ENCODE measurements at regions of chr5 and their contacts with region 1.

Region 1: GRCh38 chr5:1167728-1168709 is 33.4 kb upstream of the SLC6A19 start:
- H3K4me3 ChIP-seq: peak overlapping the region; percentile 29
- H3K27ac ChIP-seq: no peak overlapping the region
- H3K4me1 ChIP-seq: no peaks in the 10 kb centered on the region
- CTCF ChIP-seq: peak; percentile 61

Region 2: DNA sequence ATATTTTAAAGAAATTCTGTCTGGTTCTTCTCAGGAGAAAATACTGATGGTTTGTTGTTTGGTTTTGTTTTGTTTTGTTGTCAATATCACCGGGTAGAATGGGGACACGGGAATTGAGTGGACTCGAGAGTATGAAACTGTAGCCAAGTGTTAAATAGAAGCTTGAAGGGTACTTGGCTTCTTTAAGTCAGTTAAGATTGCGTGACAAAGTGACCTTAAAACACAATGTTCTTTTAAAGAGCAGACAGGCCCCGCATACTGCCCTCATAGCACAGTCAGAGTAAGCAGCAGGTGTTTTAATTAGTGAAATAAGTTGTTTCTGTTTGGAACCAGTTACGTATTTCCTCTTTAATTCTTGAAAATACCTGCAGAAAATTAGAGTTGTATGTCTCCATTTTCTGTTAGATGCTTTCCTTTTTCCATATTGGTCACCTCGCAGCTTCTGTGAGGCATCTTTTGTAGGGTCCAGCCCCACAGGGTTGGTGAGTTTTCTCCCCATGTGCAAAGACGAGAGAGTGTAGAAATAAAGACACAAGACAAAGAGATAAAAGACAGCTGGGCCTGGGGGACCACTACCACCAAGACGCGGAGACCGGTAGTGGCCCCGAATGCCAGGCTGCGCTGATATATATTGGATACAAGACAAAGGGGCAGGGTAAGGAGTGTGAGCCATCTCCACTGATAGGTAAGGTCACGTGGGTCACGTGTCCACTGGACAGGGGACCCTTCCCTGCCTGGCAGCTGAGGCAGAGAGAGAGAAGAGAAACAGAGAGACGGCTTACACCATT is 265.7 kb before region 1 on chr5:
- CTCF ChIA-PET with region 1: interaction called, 15 read pairs
- POLR2A ChIA-PET with region 1: no interaction called
- H3K4me3 ChIP-seq: no peak overlapping the region
- H3K27ac ChIP-seq: no peak overlapping the region
- H3K4me1 ChIP-seq: no peaks in the 10 kb centered on the region
- CTCF ChIP-seq: no peak

Region 3: GRCh38 chr5:997001-997474 is 171.0 kb before region 1 on chr5:
- CTCF ChIA-PET with region 1: interaction called, 10 read pairs
- POLR2A ChIA-PET with region 1: no interaction called
- H3K4me3 ChIP-seq: peak overlapping the region; percentile 8; the same call in 1 of the 2 replicates
- H3K27ac ChIP-seq: no peak overlapping the region
- H3K4me1 ChIP-seq: peaks cover 4% of the 10 kb centered on the region
- CTCF ChIP-seq: no peak

Region 4: GRCh38 chr5:1118231-1118698 is 49.8 kb before region 1 on chr5:
- CTCF ChIA-PET with region 1: interaction called, 10 read pairs
- POLR2A ChIA-PET with region 1: interaction called, 5 read pairs
- H3K4me3 ChIP-seq: no peak overlapping the region
- H3K27ac ChIP-seq: peak overlapping the region; percentile 76
- H3K4me1 ChIP-seq: peaks cover 16% of the 10 kb centered on the region
- CTCF ChIP-seq: no peak

Region 5: DNA sequence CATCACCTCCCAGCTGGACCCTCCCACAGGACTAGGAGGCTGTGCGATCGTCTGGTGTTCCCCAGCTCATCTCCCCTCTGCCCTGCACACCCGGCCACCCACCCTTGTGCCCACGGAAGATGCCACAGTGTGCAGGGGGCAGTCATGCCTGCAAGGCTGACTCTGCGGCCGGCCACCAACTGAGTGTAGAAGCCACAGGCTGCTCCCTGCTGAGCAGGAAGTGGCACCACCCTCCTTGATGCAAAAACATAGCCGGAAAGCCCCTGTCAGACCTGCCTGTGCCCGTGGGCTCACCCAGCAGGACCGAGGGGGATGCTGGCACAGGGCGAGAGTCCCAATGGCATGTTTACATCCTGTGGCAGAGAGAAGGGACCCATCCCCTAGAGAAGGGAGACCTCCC is 15.9 kb before region 1 on chr5:
- CTCF ChIA-PET with region 1: interaction called, 17 read pairs
- POLR2A ChIA-PET with region 1: no interaction called
- H3K4me3 ChIP-seq: no peak overlapping the region
- H3K27ac ChIP-seq: no peak overlapping the region; the same call in 1 of the 2 replicates
- H3K4me1 ChIP-seq: peaks cover 5% of the 10 kb centered on the region; the same call in 1 of the 2 replicates
- CTCF ChIP-seq: no peak

Region 6: DNA sequence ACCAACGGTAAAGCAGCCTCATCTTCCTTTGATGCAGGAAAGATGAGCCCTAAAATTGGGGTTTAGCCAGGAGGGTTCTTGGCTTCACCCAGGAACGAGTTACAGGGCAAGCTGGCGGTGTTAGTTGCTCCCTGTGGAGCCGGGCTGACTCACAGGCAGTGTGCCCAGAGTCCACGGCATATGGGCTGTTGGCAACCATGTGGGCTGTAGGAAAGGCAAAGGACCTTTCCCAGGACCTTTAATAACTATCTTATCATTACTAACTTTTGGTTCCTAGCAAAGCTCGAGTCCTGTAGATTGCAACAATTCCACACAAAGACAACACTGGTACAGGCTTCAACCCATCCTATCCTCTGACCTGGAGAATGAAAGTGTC is 206.6 kb after region 1 on chr5:
- CTCF ChIA-PET with region 1: no interaction called
- POLR2A ChIA-PET with region 1: no interaction called
- H3K4me3 ChIP-seq: no peak overlapping the region
- H3K27ac ChIP-seq: no peak overlapping the region
- H3K4me1 ChIP-seq: no peaks in the 10 kb centered on the region
- CTCF ChIP-seq: no peak

Measured in HEK293 (cell line).